ENCODE measurements at regions of chr11 and their contacts with region 1.

Region 1: GRCh38 chr11:123110356-123110755 is 48.4 kb upstream of the HSPA8 start:
- DNase-seq: no peak
- ATAC-seq: no peak
- H3K4me3 Mint-ChIP-seq: no peak overlapping the region
- H3K27ac Mint-ChIP-seq: peak overlapping the region; percentile 5
- H3K4me1 Mint-ChIP-seq: no peaks in the 10 kb centered on the region
- H3K27me3 Mint-ChIP-seq: no peaks in the 10 kb centered on the region

Region 2: GRCh38 chr11:123255909-123256308 is 145.6 kb after region 1 on chr11:
- CTCF ChIA-PET with region 1: interaction called, 24 read pairs
- POLR2A ChIA-PET with region 1: no interaction called
- intact Hi-C with region 1: loop called in 1 of 2 experiments (anchors 1 kb)
- DNase-seq: no peak
- ATAC-seq: no peak
- H3K4me3 Mint-ChIP-seq: no peak overlapping the region
- H3K27ac Mint-ChIP-seq: no peak overlapping the region
- H3K4me1 Mint-ChIP-seq: no peaks in the 10 kb centered on the region
- H3K27me3 Mint-ChIP-seq: peaks cover 2% of the 10 kb centered on the region

Region 3: DNA sequence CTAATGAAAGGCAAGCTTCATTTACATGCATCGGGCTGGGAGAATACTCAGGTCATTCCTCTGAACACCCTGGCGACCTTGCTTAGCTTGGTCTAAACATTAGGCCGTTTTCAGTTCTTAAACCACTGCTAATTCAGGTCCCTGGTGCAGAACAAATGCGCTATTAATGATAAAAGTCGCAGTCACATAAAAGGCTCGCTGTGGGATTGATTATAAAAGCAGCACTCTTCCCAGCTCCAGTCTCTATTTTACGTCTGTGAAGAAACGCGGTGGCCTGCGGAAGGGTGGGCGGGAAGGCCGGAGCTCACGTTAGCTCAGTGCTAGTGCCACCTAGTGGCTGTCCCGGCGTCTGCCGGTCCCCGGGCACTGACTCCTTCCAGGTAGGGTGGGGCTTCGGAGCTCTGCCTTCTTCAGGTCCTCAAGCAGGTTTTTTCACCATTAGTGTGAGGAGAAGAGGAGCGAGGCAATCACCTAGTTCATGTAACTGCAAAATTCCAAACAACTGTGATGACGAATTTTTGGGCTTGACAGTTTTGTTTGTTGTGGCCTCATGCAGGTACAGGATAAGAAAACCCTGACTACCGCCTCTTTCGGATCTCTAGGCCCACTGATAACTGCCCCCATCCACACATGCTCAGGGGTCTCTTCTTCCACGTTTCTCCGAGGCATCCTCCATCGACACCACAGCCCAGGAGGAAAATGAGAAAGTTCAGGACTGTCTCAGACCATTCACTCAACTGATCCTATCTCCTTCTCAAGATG is 151.2 kb after region 1 on chr11:
- CTCF ChIA-PET with region 1: interaction called, 24 read pairs
- POLR2A ChIA-PET with region 1: no interaction called
- intact Hi-C with region 1: loop called in 1 of 2 experiments (anchors 1 kb)
- DNase-seq: peak; percentile 90
- ATAC-seq: peak; percentile 90
- H3K4me3 Mint-ChIP-seq: peak overlapping the region; percentile 22
- H3K27ac Mint-ChIP-seq: no peak overlapping the region
- H3K4me1 Mint-ChIP-seq: peaks cover 6% of the 10 kb centered on the region
- H3K27me3 Mint-ChIP-seq: peaks cover 12% of the 10 kb centered on the region

Measured in activated CD4-positive, alpha-beta T cell treated with anti-CD3 and anti-CD28 coated beads for 36 hours (primary cell).